ENCODE measurements at regions of chr6 and their contacts with region 1.

Region 1: GRCh38 chr6:27672113-27672799 is 199.4 kb upstream of the ZNF184 start:
- DNase-seq: peak in 2 of 5 donors; percentile 29
- H3K4me3 ChIP-seq: no peak overlapping the region
- H3K4me3 Mint-ChIP-seq: peak overlapping the region; percentile 10 to 73 (median 46)
- H3K27ac ChIP-seq: no peak overlapping the region
- H3K27ac Mint-ChIP-seq: peak overlapping the region in 4 of 7 donors; percentile 32 to 86 (median 76)
- H3K4me1 ChIP-seq: peaks cover 14% of the 10 kb centered on the region
- H3K4me1 Mint-ChIP-seq: peaks cover 10 to 41% (median 26%) of the 10 kb centered on the region in 4 donors
- H3K27me3 ChIP-seq: peaks cover 50% of the 10 kb centered on the region
- H3K27me3 Mint-ChIP-seq: peaks cover 63 to 65% of the 10 kb centered on the region in 2 donors

Region 2: GRCh38 chr6:27280064-27280539 is 392.2 kb before region 1 on chr6:
- CTCF ChIA-PET with region 1: no interaction called
- POLR2A ChIA-PET with region 1: interaction called, 3 read pairs
- intact Hi-C with region 1: loop called (anchors 5 kb)
- DNase-seq: no peak
- H3K4me3 ChIP-seq: no peak overlapping the region
- H3K4me3 Mint-ChIP-seq: peak overlapping the region in 4 of 8 donors; percentile 13 to 54 (median 30)
- H3K27ac ChIP-seq: no peak overlapping the region
- H3K27ac Mint-ChIP-seq: peak overlapping the region in 3 of 7 donors; percentile 66 to 87 (median 82)
- H3K4me1 ChIP-seq: peaks cover 5% of the 10 kb centered on the region
- H3K4me1 Mint-ChIP-seq: peaks cover 4 to 6% (median 4%) of the 10 kb centered on the region in 4 donors
- H3K27me3 ChIP-seq: peaks cover 64% of the 10 kb centered on the region
- H3K27me3 Mint-ChIP-seq: peaks cover 60 to 63% of the 10 kb centered on the region in 2 donors

Region 3: GRCh38 chr6:27295301-27296081 is 376.8 kb before region 1 on chr6:
- CTCF ChIA-PET with region 1: no interaction called
- POLR2A ChIA-PET with region 1: no interaction called
- intact Hi-C with region 1: loop called (anchors 5 kb)
- DNase-seq: no peak
- H3K4me3 ChIP-seq: no peak overlapping the region
- H3K4me3 Mint-ChIP-seq: peak overlapping the region in 5 of 8 donors; percentile 27 to 73 (median 43)
- H3K27ac ChIP-seq: no peak overlapping the region
- H3K27ac Mint-ChIP-seq: peak overlapping the region in 5 of 7 donors; percentile 57 to 93 (median 81)
- H3K4me1 ChIP-seq: no peaks in the 10 kb centered on the region
- H3K4me1 Mint-ChIP-seq: peaks cover 0 to 3% (median 0%) of the 10 kb centered on the region in 4 donors
- H3K27me3 ChIP-seq: peaks cover 61% of the 10 kb centered on the region
- H3K27me3 Mint-ChIP-seq: peaks cover 73% of the 10 kb centered on the region in 2 donors

Region 4: GRCh38 chr6:27545271-27546046 is 126.8 kb before region 1 on chr6:
- CTCF ChIA-PET with region 1: no interaction called
- POLR2A ChIA-PET with region 1: no interaction called
- intact Hi-C with region 1: loop called (anchors 10 kb)
- DNase-seq: no peak
- H3K4me3 ChIP-seq: no peak overlapping the region
- H3K4me3 Mint-ChIP-seq: peak overlapping the region in 4 of 8 donors; percentile 27 to 40 (median 32)
- H3K27ac ChIP-seq: no peak overlapping the region
- H3K27ac Mint-ChIP-seq: peak overlapping the region in 3 of 7 donors; percentile 10 to 36 (median 35)
- H3K4me1 ChIP-seq: peaks cover 14% of the 10 kb centered on the region
- H3K4me1 Mint-ChIP-seq: peaks cover 0 to 14% (median 10%) of the 10 kb centered on the region in 4 donors
- H3K27me3 ChIP-seq: peaks cover 64% of the 10 kb centered on the region
- H3K27me3 Mint-ChIP-seq: peaks cover 77 to 79% of the 10 kb centered on the region in 2 donors

Region 5: GRCh38 chr6:27592481-27593199 is 79.6 kb before region 1 on chr6:
- CTCF ChIA-PET with region 1: no interaction called
- POLR2A ChIA-PET with region 1: no interaction called
- intact Hi-C with region 1: loop called (anchors 5 kb)
- DNase-seq: peak in 4 of 5 donors; percentile 22 to 35 (median 27)
- H3K4me3 ChIP-seq: no peak overlapping the region
- H3K4me3 Mint-ChIP-seq: no peak overlapping the region
- H3K27ac ChIP-seq: no peak overlapping the region
- H3K27ac Mint-ChIP-seq: no peak overlapping the region
- H3K4me1 ChIP-seq: peaks cover 16% of the 10 kb centered on the region
- H3K4me1 Mint-ChIP-seq: no peaks in the 10 kb centered on the region
- H3K27me3 ChIP-seq: peaks cover 31% of the 10 kb centered on the region
- H3K27me3 Mint-ChIP-seq: peaks cover 25 to 28% of the 10 kb centered on the region in 2 donors

Region 6: GRCh38 chr6:27687154-27688013 is 15.1 kb after region 1 on chr6:
- CTCF ChIA-PET with region 1: interaction called, 4 read pairs
- POLR2A ChIA-PET with region 1: interaction called, 3 read pairs
- intact Hi-C with region 1: loop called (anchors 2 kb)
- DNase-seq: peak; percentile 66 to 81 (median 71)
- H3K4me3 ChIP-seq: peak overlapping the region; percentile 98
- H3K4me3 Mint-ChIP-seq: peak overlapping the region; percentile 86 to 96 (median 92)
- H3K27ac ChIP-seq: peak overlapping the region; percentile 65
- H3K27ac Mint-ChIP-seq: peak overlapping the region; percentile 76 to 100 (median 94)
- H3K4me1 ChIP-seq: peaks cover 16% of the 10 kb centered on the region
- H3K4me1 Mint-ChIP-seq: peaks cover 16 to 26% (median 20%) of the 10 kb centered on the region in 4 donors
- H3K27me3 ChIP-seq: peaks cover under 1% of the 10 kb centered on the region
- H3K27me3 Mint-ChIP-seq: peaks cover 6 to 14% of the 10 kb centered on the region in 2 donors

Measured in CD4-positive, alpha-beta memory T cell (primary cell).